ENCODE measurements at regions of chr1 and their contacts with region 1.

Region 1: GRCh38 chr1:211752951-211753486 is 77.5 kb downstream of the LPGAT1 start:
- DNase-seq: no peak
- H3K4me3 ChIP-seq: no peak overlapping the region
- H3K27ac ChIP-seq: no peak overlapping the region
- H3K4me1 ChIP-seq: no peaks in the 10 kb centered on the region
- H3K27me3 ChIP-seq: no peaks in the 10 kb centered on the region

Region 2: GRCh38 chr1:211705467-211706091 is 47.4 kb before region 1 on chr1:
- CTCF ChIA-PET with region 1: no interaction called
- POLR2A ChIA-PET with region 1: no interaction called
- DNase-seq: no peak
- H3K4me3 ChIP-seq: no peak overlapping the region
- H3K27ac ChIP-seq: no peak overlapping the region
- H3K4me1 ChIP-seq: peaks cover 0 to 5% (median 0%) of the 10 kb centered on the region in 4 experiments
- H3K27me3 ChIP-seq: no peaks in the 10 kb centered on the region

Region 3: DNA sequence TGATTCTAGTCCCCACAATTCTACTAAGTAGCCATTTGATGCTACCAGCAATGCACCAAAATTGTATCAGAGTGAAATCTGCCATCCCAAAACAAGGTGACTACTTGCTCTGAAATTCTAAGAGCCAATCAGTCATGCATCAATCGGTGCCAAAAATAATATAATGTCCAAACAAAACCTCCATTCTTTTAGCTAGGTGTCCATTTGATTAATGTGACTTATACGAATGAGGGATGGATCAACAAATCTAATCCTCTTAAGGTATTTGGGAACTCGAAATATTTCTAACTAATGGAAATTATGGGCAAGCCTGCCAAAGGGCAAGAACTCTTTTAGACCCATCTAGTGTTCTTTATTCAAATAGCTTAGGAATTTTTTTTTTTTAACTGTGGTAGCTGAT is 11.2 kb before region 1 on chr1:
- CTCF ChIA-PET with region 1: interaction called, 10 read pairs
- POLR2A ChIA-PET with region 1: no interaction called
- DNase-seq: no peak
- H3K4me3 ChIP-seq: no peak overlapping the region
- H3K27ac ChIP-seq: no peak overlapping the region
- H3K4me1 ChIP-seq: peaks cover 4 to 21% (median 12%) of the 10 kb centered on the region in 4 experiments
- H3K27me3 ChIP-seq: no peaks in the 10 kb centered on the region

Measured in common myeloid progenitor, CD34-positive (primary cell).